Ascending aorta (tissue), 2 donors: ENCODE measurements at regions of chr19 and their contacts with region 1.

Region 1: GRCh38 chr19:54102421-54103169 is at the start of gene NDUFA3:
- DNase-seq: peak; percentile 97 to 99
- H3K4me3 ChIP-seq: peak within 1 kb of the TSS; percentile 72 to 83
- H3K27ac ChIP-seq: peak within 1 kb of the TSS in 1 of 2 donors; percentile 67
- H3K4me1 ChIP-seq: peaks cover 0 to 7% of the 10 kb centered on the region in 2 donors
- H3K27me3 ChIP-seq: no peaks in the 10 kb centered on the region
- CTCF ChIP-seq: no peak
- total RNA-seq, gene NDUFA3: 12.5 TPM

Region 2: DNA sequence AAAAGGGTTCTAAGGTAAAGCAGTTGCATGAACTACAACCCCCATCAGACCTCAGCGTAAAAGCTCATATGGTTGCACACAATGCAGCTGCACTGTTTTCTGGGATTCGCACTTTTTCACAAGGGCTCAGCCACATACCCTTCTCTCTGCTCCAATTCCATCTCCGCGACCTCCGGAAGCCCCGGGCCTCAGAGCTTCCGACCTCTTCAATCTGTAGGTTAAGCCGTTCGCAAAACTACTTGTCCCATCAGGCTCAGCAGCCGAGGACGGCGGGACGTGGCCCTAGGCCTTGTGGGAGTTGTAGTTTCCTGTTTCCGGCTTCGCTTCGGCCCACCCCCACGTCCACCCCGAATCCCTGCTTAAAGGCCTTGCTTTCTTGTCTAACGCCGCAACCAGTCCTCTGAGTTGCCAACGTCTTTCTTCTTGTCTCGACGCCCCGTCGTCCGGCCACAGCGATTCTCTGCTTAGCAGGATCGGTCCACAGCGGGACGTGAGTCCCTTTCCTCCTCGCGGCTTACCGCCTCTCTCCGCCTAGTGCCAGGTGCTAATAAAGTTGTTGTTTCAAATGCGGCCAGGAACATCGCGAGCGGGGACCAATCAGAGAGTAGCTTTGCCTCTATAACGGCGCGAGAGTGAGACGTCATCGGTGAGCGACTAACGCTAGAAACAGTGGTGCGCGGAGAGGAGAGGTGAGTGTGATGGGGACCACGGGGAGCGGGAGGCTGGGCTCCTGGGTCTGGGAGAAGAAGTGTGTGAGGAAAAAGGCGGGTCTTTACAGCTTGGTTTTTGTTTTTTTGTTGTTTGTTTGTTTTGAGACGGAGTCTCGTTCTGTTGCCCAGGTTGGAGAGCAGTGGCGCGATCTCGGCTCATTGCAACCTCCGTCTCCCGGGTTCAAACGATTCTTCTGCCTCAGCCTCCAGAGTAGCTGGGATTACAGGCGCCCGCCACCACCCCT is 12.8 kb after region 1 on chr19 and contains the starts of genes PRPF31 and TFPT:
- intact Hi-C with region 1: loop called (anchors 1 kb)
- DNase-seq: peak; percentile 85 to 99
- H3K4me3 ChIP-seq: peak within 1 kb of the TSS; percentile 95 to 96
- H3K27ac ChIP-seq: peak within 1 kb of the TSS; percentile 91 to 94
- H3K4me1 ChIP-seq: peaks cover 12 to 24% of the 10 kb centered on the region in 2 donors
- H3K27me3 ChIP-seq: no peaks in the 10 kb centered on the region
- CTCF ChIP-seq: no peak
- total RNA-seq, gene PRPF31: 84.1 TPM
- total RNA-seq, gene TFPT: 10.6 TPM

Region 3: DNA sequence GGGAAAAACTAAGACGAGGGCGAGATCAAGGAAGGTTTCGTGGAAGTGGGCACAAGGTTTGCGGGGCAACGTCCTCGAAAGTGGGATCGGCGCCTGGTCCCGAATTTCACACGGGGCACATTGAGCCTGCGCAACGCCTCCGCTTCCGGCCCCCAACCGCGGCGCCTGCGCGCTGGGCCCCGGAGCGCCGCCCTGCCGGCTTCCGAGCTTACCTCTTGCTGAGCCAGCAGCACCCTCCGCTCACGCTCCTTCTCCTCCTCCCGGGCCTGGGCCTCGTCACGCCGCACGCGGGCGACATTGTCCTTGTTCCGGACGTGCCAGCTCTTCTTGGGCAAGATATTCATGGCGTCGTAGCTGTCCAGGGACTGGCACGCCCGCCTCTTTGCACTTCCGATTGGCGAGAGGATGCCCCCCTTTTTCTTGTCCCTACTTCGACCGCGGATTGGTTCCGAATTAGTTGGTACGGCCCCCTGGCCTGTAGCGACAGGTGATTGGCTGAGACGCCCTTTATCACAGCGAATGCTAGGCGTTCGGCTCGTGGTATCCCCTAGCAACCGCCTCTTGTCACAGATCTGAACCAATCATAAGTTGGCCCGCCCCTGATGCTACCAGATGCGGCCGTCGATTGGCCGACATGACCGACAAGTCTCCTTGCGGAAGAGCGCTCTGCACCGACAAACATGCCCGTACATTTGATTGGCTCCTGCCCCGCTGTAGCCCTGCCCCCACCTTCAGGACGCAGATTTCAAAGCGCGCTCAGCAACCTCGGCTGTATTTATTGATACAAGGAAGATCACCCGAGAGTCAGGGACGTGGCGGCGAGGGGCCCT is 57.0 kb after region 1 on chr19 and contains the start of gene LENG1:
- intact Hi-C with region 1: loop called (anchors 2 kb)
- DNase-seq: peak; percentile 100
- H3K4me3 ChIP-seq: peak within 1 kb of the TSS; percentile 65 to 83
- H3K27ac ChIP-seq: peak within 1 kb of the TSS; percentile 89 to 93
- H3K4me1 ChIP-seq: peaks cover 15 to 21% of the 10 kb centered on the region in 2 donors
- H3K27me3 ChIP-seq: peaks cover 4% of the 10 kb centered on the region
- CTCF ChIP-seq: peak; percentile 28 to 49 (median 36)
- total RNA-seq, gene LENG1: 2.7 TPM